Esophagus muscularis mucosa (tissue), 4 donors: ENCODE measurements at regions of chr15 and their contacts with region 1.

Region 1: DNA sequence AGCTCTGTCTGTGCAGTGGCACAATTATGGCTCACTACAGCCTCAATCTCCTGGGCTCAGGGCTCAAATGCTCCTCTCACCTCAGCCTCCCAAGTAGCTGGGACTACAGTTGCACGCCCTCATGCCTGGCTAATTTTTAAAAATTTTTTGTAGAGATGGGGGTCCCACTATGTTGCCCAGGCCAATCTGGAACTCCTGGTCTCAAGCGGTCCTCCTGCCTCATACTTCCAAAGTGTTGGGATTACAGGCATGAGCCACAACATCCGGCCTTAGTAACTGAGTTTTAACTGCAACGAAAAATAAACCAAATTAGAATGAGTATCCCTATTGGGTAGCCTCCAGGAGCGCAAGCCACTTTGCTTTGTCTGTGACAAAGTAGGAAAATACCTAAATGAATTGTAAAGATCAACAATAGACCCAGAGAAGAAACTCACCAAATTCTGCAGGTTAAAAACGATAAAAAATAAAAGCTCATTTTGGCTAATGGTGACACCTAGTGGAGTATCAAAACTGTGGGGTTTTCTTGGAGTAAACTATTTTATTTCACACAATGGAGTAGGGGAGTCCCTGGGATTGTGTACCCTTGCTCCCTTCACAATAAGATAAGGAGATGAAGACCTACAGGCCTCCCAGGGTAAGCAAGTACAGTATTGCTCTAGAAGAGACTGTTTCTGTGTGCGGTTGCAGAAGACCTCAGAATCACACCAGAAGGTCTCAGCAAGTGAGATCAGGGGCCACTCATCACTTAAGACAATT is 21.0 kb upstream of the CA12 start:
- DNase-seq: no peak
- H3K4me3 ChIP-seq: peak overlapping the region in 2 of 4 donors; percentile 12 to 18
- H3K27ac ChIP-seq: no peak overlapping the region
- H3K4me1 ChIP-seq: peaks cover 0 to 8% (median 5%) of the 10 kb centered on the region in 4 donors
- H3K27me3 ChIP-seq: no peaks in the 10 kb centered on the region
- CTCF ChIP-seq: peak; percentile 70 to 75 (median 72)
- EP300 ChIP-seq: no peak
- POLR2A ChIP-seq: no peak

Region 2: GRCh38 chr15:63166219-63166618 is 236.5 kb before region 1 on chr15:
- intact Hi-C with region 1: loop called (anchors 10 kb)
- DNase-seq: no peak
- H3K4me3 ChIP-seq: no peak overlapping the region
- H3K27ac ChIP-seq: no peak overlapping the region
- H3K4me1 ChIP-seq: peaks cover 0 to 10% (median 6%) of the 10 kb centered on the region in 4 donors
- H3K27me3 ChIP-seq: no peaks in the 10 kb centered on the region
- CTCF ChIP-seq: no peak
- EP300 ChIP-seq: no peak
- POLR2A ChIP-seq: no peak

Region 3: GRCh38 chr15:63238796-63239195 is 163.9 kb before region 1 on chr15:
- intact Hi-C with region 1: no loop called
- DNase-seq: no peak
- H3K4me3 ChIP-seq: no peak overlapping the region
- H3K27ac ChIP-seq: peak overlapping the region in 1 of 4 donors; percentile 36
- H3K4me1 ChIP-seq: peaks cover 33 to 64% (median 60%) of the 10 kb centered on the region in 4 donors
- H3K27me3 ChIP-seq: no peaks in the 10 kb centered on the region
- CTCF ChIP-seq: no peak
- EP300 ChIP-seq: no peak
- POLR2A ChIP-seq: no peak

Region 4: GRCh38 chr15:63288778-63289378 is 113.8 kb before region 1 on chr15:
- intact Hi-C with region 1: loop called (anchors 2 kb)
- DNase-seq: no peak
- H3K4me3 ChIP-seq: no peak overlapping the region
- H3K27ac ChIP-seq: no peak overlapping the region
- H3K4me1 ChIP-seq: peaks cover 9 to 13% (median 10%) of the 10 kb centered on the region in 4 donors
- H3K27me3 ChIP-seq: no peaks in the 10 kb centered on the region
- CTCF ChIP-seq: peak; percentile 62 to 79 (median 73)
- EP300 ChIP-seq: no peak
- POLR2A ChIP-seq: no peak